Right ventricle myocardium inferior (tissue), 1 donor: ENCODE measurements at regions of chr10 and their contacts with region 1.

Region 1: DNA sequence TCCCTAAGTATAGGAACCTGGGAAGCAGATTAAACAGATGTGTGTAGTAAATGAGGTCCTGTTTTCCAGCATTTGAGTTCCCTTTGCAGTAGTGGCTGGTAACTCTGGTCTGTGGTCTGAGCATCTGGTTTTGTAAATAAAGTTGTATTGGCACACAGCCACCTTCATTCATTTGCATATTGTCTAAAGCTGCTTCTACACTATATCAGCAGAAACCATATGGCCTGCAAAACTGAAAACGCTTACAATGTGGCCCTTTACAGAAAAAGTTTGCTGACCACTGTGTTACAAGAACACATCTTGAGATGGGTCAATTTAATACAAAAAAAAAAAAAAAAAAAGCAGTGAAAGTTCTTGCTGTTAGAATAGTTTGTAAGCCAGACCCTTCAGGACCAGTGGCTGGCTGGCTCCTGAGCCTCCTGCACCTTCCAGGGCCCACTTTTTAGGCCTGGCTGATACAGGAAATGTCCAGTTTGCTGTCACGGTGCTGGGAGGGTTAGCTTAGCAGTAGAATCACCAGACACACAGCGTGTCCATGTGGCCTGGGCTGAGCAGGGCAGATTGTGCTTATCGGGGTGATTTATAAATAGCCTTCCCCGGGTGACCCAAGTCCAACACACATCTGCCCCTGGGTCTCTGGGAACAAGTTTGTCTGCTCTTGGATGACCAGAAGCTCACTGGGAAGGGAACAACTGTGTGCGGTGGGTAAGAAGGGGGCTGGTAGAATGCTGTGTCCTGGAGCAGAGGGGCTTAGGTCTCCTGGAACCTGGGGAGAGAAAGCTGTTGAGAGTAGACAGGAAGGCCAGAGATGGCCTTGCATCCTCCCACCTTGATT is 1.4 kb downstream of the C10orf71 start:
- DNase-seq: no peak
- ATAC-seq: peak; percentile 77

Region 2: GRCh38 chr10:49225218-49225876 is 75.0 kb before region 1 on chr10:
- intact Hi-C with region 1: loop called (anchors 2 kb)
- DNase-seq: peak; percentile 66
- ATAC-seq: peak; percentile 69

Region 3: DNA sequence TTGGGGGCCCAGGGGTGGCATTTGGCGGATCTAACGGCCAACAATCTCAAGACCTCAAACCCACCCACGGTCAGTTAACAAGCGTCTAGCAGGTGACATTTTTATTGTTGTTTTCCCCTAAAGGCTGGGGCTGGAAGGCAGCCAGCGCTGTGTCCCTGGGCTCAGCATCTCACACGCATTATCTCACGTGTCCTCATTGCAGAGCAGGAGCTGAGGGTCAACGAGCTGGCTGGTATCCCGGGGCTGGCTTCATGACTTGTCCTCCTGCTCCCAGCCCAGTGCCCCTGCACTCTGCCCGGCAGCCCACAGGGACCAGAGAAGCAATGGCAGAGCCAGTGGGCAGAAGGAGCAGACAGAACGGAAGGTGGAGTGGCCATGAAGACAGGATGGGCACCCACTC is 57.8 kb before region 1 on chr10:
- intact Hi-C with region 1: loop called (anchors 2 kb)
- DNase-seq: peak; percentile 75
- ATAC-seq: peak; percentile 78

Region 4: DNA sequence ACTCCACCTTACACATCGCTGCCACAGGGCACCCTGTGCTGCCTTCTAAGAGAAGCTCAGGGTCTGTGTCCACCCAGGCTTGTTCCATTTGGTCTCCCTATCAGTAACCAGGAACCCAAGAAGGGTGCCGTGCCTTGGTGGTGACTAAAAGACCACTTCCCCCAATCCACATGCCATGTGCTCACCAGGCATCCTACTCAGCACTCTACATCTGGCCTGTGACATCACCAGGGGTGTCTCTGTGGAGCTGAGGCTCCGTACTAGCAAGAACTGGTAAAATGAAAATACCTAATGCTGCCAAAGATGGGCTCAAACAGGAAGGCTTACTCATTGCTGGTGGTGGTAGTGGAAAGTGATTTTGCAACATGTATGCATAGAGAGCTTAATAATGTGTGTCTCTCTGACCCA is 20.4 kb before region 1 on chr10:
- intact Hi-C with region 1: loop called (anchors 1 kb)
- DNase-seq: no peak
- ATAC-seq: no peak

Region 5: GRCh38 chr10:49324711-49325110 is 24.4 kb after region 1 on chr10:
- intact Hi-C with region 1: loop called (anchors 2 kb)
- DNase-seq: no peak
- ATAC-seq: no peak

Region 6: GRCh38 chr10:49362596-49363260 is 62.4 kb after region 1 on chr10:
- intact Hi-C with region 1: loop called (anchors 5 kb)
- DNase-seq: no peak
- ATAC-seq: no peak

Region 7: DNA sequence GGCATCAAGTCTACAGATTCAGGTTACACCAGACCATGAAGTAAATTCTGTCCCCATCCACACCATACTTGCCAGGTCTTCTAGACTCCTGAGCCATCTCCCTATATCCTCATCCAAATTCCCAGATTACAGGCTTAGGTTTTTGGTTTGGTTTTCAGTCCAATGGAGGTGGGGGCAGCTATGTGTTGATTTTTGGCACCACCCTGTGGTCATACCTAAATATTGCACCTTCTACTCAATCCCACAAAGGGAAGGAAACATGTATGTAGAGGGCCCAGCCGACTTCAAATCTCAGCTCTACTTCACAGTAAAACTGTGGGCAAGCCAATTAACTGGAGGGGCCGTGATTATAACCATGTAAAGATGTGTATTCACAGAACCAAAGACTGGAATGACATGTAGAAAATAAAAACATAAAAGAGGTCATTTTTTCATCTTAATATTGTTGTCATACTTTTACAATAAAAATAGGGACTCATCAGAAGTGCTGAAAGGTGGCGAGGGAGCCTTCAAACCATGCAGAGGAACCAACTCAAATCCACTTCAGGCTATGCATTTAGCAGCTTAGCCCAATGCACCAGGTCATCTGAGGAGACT is 218.7 kb after region 1 on chr10:
- intact Hi-C with region 1: loop called (anchors 10 kb)
- DNase-seq: no peak
- ATAC-seq: peak; percentile 58